ENCODE measurements at regions of chr7 and their contacts with region 1.

Region 1: DNA sequence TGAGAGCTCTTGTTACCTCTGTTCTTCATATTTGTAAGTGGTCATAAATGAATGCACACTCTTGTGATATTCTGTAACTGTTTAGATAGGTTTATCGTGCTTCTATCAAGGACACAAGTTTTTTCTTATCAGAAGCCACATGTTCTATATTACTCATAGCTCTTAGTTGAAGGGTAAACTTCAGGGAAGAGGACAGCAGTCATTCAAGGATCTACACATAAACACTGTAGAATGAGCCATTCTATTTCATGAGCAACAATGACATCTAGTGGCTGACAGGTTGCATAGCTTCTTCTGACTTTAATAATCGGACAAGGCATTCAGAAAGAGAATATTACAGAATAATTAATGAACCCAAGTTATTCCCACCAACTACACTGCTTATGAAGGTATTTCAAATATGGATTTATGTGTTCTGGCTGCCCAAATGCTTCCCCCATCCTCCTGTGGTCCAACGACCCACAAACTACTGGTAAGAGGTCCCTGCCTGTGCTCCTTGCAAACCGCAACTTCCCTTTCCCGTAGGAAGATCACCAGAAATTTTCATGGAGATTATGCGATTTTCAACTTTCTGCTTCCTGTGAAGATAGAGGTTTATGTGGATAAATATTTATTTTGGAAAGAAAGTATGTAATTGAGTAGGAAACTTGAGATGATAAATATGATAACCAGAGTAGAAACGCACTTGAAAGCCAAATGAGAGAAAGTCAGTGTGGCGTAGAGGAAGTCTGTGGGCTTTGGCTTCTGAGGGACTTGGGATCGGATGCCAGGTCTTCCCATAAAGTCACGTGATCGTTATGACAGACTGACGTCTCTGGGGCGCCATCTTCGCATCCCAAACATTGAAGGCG is 16.8 kb upstream of the ABCB5 start:
- DNase-seq: peak; percentile 67
- H3K4me3 ChIP-seq: no peak overlapping the region
- H3K27ac ChIP-seq: no peak overlapping the region
- H3K4me1 ChIP-seq: peaks cover 15% of the 10 kb centered on the region
- H3K27me3 ChIP-seq: peaks cover 16% of the 10 kb centered on the region; the same call in 1 of the 2 replicates

Region 2: DNA sequence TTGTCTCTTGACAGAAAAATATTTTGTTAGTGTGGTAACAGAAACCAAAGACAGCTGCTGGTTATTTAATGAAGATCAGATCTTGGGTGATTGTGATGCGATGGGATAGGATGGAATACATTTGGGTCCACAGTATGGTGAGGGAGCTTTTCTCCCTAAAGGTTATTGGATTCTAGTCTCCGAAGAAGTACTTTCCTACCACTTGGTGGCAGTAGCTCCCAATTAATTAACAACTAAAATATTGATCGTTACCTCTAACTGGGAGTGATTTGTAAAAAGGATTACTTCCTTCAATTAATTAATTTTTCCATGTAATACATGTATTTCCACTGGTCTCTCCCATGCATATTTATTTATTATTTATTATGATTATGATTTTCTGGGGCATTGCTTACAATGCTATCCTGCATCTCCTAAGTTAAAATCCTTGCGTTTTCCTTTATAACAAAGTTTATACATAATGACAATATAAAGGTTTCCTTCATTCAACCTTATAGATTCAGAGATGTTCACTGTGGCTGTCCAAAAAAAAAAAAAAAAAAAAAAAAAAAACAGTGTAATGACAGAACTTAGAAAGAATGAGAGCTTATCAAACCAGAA is 850.8 kb before region 1 on chr7:
- in situ Hi-C with region 1: loop called (anchors 10 kb)
- DNase-seq: peak; percentile 59
- H3K4me3 ChIP-seq: no peak overlapping the region
- H3K27ac ChIP-seq: no peak overlapping the region
- H3K4me1 ChIP-seq: no peaks in the 10 kb centered on the region
- H3K27me3 ChIP-seq: no peaks in the 10 kb centered on the region; the same call in 1 of the 2 replicates

Region 3: GRCh38 chr7:19982841-19983835 is 615.5 kb before region 1 on chr7:
- in situ Hi-C with region 1: loop called (anchors 10 kb)
- DNase-seq: peak; percentile 87
- H3K4me3 ChIP-seq: no peak overlapping the region
- H3K27ac ChIP-seq: no peak overlapping the region
- H3K4me1 ChIP-seq: no peaks in the 10 kb centered on the region
- H3K27me3 ChIP-seq: no peaks in the 10 kb centered on the region

Region 4: DNA sequence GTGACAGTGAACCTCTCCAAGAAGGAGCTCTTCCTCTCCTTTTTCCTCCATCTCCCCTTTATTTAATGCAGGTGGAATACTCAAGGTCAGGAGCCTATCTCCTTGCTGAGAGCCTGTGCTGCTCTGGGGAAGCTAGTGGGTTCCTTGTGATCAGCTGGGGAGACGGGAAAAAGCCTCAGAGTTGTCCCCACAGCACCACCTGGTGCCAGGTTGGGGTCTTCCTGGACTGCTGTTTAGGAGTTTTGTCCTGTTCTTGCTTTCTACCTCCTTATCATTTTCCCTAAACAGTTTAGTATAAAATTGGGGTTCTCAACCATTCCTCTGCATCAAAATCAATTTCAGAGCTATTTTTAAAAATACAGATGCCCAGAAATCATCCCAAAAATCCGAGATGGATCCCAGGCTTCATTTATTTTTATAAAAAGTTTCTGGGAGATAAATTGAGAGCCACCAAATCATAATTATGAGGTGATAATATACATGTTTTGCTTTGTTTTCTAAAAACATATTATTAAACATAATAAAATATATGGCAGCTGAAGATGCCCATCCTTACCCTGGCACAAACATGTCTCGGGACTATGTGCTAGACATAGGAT is 425.8 kb before region 1 on chr7:
- in situ Hi-C with region 1: loop called (anchors 25 kb)
- DNase-seq: peak; percentile 68
- H3K4me3 ChIP-seq: no peak overlapping the region
- H3K27ac ChIP-seq: no peak overlapping the region
- H3K4me1 ChIP-seq: peaks cover 14% of the 10 kb centered on the region
- H3K27me3 ChIP-seq: no peaks in the 10 kb centered on the region